ENCODE measurements at regions of chr7 and their contacts with region 1.

Region 1: GRCh38 chr7:138886501-138886917 is 88.5 kb upstream of the ATP6V0A4 start:
- DNase-seq: peak; percentile 55 to 67
- ATAC-seq: no peak
- H3K4me3 ChIP-seq: no peak overlapping the region
- H3K27ac ChIP-seq: peak overlapping the region in 1 of 2 experiments; percentile 60; a peak in 3 of 6 replicates
- H3K4me1 ChIP-seq: peaks cover 27% of the 10 kb centered on the region
- CTCF ChIP-seq: peak; percentile 65
- EP300 ChIP-seq: no peak
- POLR2A ChIP-seq: no peak
- RAD21 ChIP-seq: peak; percentile 60 to 64

Region 2: GRCh38 chr7:138875794-138876193 is 10.7 kb before region 1 on chr7:
- CTCF ChIA-PET with region 1: interaction called, 19 read pairs
- POLR2A ChIA-PET with region 1: interaction called, 3 read pairs
- DNase-seq: no peak
- ATAC-seq: peak; percentile 71 to 75; a peak in 5 of 6 replicates
- H3K4me3 ChIP-seq: no peak overlapping the region
- H3K27ac ChIP-seq: peak overlapping the region in 1 of 2 experiments; percentile 72; a peak in 3 of 6 replicates
- H3K4me1 ChIP-seq: peaks cover 26% of the 10 kb centered on the region
- CTCF ChIP-seq: no peak
- EP300 ChIP-seq: peak in 1 of 2 experiments; percentile 43; a peak in 1 of 5 replicates
- POLR2A ChIP-seq: no peak
- RAD21 ChIP-seq: no peak

Region 3: GRCh38 chr7:138898255-138898654 is 11.7 kb after region 1 on chr7:
- CTCF ChIA-PET with region 1: interaction called, 27 read pairs
- POLR2A ChIA-PET with region 1: no interaction called
- DNase-seq: no peak
- ATAC-seq: no peak
- H3K4me3 ChIP-seq: no peak overlapping the region
- H3K27ac ChIP-seq: no peak overlapping the region
- H3K4me1 ChIP-seq: peaks cover 23% of the 10 kb centered on the region
- CTCF ChIP-seq: no peak
- EP300 ChIP-seq: no peak
- POLR2A ChIP-seq: no peak
- RAD21 ChIP-seq: no peak

Region 4: DNA sequence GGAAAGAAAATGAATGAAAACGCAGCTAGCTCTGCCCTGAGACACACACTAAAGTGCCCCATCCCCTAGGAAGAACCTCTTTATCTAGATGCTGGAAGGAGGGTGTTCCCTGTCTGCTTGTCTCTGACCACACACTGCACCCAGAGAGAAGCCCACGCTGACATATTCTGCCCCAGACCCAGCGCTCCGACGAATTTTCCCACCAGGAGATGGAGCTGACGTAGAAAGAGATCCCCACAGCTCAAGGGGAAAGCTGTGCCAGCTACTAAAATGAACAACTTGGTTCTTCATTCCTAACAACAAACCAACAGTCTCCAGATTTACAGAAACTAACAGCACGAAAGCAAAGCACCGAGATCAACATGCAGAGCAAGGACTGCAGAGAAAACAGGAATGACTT is 21.3 kb after region 1 on chr7:
- CTCF ChIA-PET with region 1: interaction called, 12 read pairs
- POLR2A ChIA-PET with region 1: no interaction called
- DNase-seq: no peak
- ATAC-seq: no peak
- H3K4me3 ChIP-seq: no peak overlapping the region
- H3K27ac ChIP-seq: no peak overlapping the region
- H3K4me1 ChIP-seq: no peaks in the 10 kb centered on the region
- CTCF ChIP-seq: no peak
- EP300 ChIP-seq: no peak
- POLR2A ChIP-seq: no peak
- RAD21 ChIP-seq: 0 out of 5 replicates have a peak, but pooled peaks of 1 of the 2 experiments have one; percentile 6

Region 5: GRCh38 chr7:138981332-138982203 is 95.1 kb after region 1 on chr7 and contains the start of gene KIAA1549:
- CTCF ChIA-PET with region 1: interaction called, 27 read pairs
- POLR2A ChIA-PET with region 1: interaction called, 5 read pairs
- DNase-seq: peak; percentile 67 to 72
- ATAC-seq: peak; percentile 83 to 92
- H3K4me3 ChIP-seq: peak within 1 kb of the TSS; percentile 86
- H3K27ac ChIP-seq: peak within 1 kb of the TSS; percentile 90 to 99
- H3K4me1 ChIP-seq: peaks cover 23% of the 10 kb centered on the region
- CTCF ChIP-seq: peak; percentile 68
- EP300 ChIP-seq: no peak
- POLR2A ChIP-seq: no peak
- RAD21 ChIP-seq: no peak; a peak in 2 of 5 replicates
- polyA plus RNA-seq, gene KIAA1549: 4.1 and 9.2 TPM in 2 replicates

Region 6: DNA sequence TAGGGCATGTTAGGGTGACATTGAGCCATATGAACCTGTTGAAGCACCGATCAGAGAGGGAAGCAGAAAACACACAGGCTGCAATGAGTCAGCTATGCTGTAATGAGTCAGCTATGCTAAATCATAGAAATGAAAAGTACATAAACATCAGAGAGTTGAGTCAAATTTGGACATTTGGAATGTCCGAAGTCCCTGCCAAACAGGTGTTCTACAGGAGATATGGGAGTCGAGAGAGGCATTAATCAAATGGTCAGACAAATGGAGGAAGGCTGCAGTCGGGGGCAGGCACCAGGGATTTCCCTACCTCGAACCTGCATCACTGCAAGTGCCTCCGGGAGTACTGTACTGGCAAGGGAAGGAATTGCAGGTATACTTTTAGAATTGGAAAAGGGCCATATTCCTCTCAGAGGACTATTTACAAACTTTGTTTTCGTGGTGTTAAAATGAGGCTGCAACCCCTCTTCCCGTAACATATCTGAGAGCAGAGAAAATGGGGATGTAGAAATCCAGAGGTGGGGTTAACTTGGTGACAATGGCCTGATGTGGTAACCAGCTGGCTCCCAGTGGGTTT is 231.8 kb after region 1 on chr7:
- CTCF ChIA-PET with region 1: no interaction called
- POLR2A ChIA-PET with region 1: no interaction called
- DNase-seq: peak; percentile 50 to 62
- ATAC-seq: peak; percentile 84 to 85
- H3K4me3 ChIP-seq: no peak overlapping the region
- H3K27ac ChIP-seq: peak overlapping the region in 1 of 2 experiments; percentile 39; a peak in 2 of 6 replicates
- H3K4me1 ChIP-seq: peaks cover 28% of the 10 kb centered on the region
- CTCF ChIP-seq: no peak
- EP300 ChIP-seq: no peak
- POLR2A ChIP-seq: no peak
- RAD21 ChIP-seq: no peak